Activated B cell treated with CpG ODN at 0.5 μM for 24 hours (primary cell): ENCODE measurements at regions of chr6 and their contacts with region 1.

Region 1: GRCh38 chr6:42879372-42880239 is at the start of gene RPL7L1:
- DNase-seq: peak; percentile 76
- ATAC-seq: peak; percentile 92
- H3K4me3 Mint-ChIP-seq: peak within 1 kb of the TSS; percentile 100
- H3K27ac Mint-ChIP-seq: peak within 1 kb of the TSS; percentile 99
- H3K4me1 Mint-ChIP-seq: peaks cover 28% of the 10 kb centered on the region
- H3K27me3 Mint-ChIP-seq: no peaks in the 10 kb centered on the region
- CTCF ChIP-seq: no peak
- total RNA-seq, gene RPL7L1: 94.5 and 110 TPM in 2 replicates

Region 2: DNA sequence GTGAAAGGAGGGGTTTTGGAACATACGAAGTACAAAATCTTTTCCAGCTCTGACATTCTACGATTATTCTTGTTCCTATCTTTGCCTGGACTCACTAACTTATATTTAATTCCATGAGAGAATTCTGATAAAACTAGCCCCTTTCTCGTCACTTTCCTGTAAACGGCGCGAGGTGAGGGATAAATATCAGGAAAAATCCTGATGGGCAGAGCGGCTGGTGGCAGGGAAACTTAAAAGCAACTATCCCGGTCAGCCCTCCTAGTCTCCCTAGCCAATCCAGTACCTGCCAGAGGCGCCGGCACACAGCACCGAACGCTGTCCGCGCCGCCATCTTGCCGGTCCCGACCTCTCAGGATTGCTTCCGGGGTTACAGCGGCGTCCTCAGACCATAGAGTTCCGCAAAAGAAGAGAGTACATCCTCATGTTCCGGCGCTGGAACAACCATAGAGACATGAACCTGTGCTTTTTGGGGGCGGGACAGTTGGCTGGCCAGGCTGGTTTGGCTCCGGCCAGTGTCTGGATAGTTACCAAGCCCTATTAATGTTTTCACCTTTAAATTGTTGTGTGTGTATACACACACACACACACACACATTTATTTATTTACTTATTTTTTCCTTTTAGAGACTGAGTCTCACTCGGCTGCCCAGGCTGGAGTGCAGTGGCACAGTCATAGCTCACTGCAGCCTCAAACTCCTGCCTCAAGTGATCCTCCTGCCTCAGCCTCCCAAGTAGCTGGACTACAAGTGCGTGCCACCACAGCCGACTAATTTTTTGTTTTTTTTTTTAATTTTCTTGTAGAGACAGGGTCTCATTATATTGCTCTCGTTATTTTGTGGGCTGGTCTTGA is 661.9 kb before region 1 on chr6 and contains the start of gene MRPS10:
- CTCF ChIA-PET with region 1: no interaction called
- POLR2A ChIA-PET with region 1: no interaction called
- intact Hi-C with region 1: loop called (anchors 1 kb)
- DNase-seq: peak; percentile 76
- ATAC-seq: peak; percentile 99
- H3K4me3 Mint-ChIP-seq: peak within 1 kb of the TSS; percentile 99
- H3K27ac Mint-ChIP-seq: peak within 1 kb of the TSS; percentile 95
- H3K4me1 Mint-ChIP-seq: peaks cover 30% of the 10 kb centered on the region
- H3K27me3 Mint-ChIP-seq: no peaks in the 10 kb centered on the region
- CTCF ChIP-seq: no peak
- total RNA-seq, gene MRPS10: 35.7 and 37.0 TPM in 2 replicates

Region 3: GRCh38 chr6:42661540-42662153 is 218.0 kb before region 1 on chr6:
- CTCF ChIA-PET with region 1: interaction called, 51 read pairs
- POLR2A ChIA-PET with region 1: interaction called, 10 read pairs
- intact Hi-C with region 1: loop called (anchors 1 kb)
- DNase-seq: peak; percentile 65
- ATAC-seq: peak; percentile 96
- H3K4me3 Mint-ChIP-seq: no peak overlapping the region
- H3K27ac Mint-ChIP-seq: no peak overlapping the region
- H3K4me1 Mint-ChIP-seq: no peaks in the 10 kb centered on the region
- H3K27me3 Mint-ChIP-seq: no peaks in the 10 kb centered on the region
- CTCF ChIP-seq: peak; percentile 74

Region 4: GRCh38 chr6:42771741-42772100 is 107.9 kb before region 1 on chr6:
- CTCF ChIA-PET with region 1: no interaction called
- POLR2A ChIA-PET with region 1: interaction called, 21 read pairs
- intact Hi-C with region 1: loop called (anchors 1 kb)
- DNase-seq: no peak
- ATAC-seq: no peak
- H3K4me3 Mint-ChIP-seq: peak overlapping the region; percentile 85
- H3K27ac Mint-ChIP-seq: peak overlapping the region; percentile 99
- H3K4me1 Mint-ChIP-seq: peaks cover 57% of the 10 kb centered on the region
- H3K27me3 Mint-ChIP-seq: no peaks in the 10 kb centered on the region
- CTCF ChIP-seq: no peak

Region 5: GRCh38 chr6:42890311-42891198 is 10.9 kb after region 1 on chr6:
- CTCF ChIA-PET with region 1: interaction called, 11 read pairs
- POLR2A ChIA-PET with region 1: interaction called, 85 read pairs
- intact Hi-C with region 1: loop called (anchors 1 kb)
- DNase-seq: peak; percentile 76
- ATAC-seq: peak; percentile 97
- H3K4me3 Mint-ChIP-seq: peak overlapping the region; percentile 97
- H3K27ac Mint-ChIP-seq: peak overlapping the region; percentile 93
- H3K4me1 Mint-ChIP-seq: peaks cover 44% of the 10 kb centered on the region
- H3K27me3 Mint-ChIP-seq: no peaks in the 10 kb centered on the region
- CTCF ChIP-seq: no peak

Region 6: GRCh38 chr6:42901536-42901957 is 21.9 kb after region 1 on chr6:
- CTCF ChIA-PET with region 1: interaction called, 11 read pairs
- POLR2A ChIA-PET with region 1: no interaction called
- intact Hi-C with region 1: loop called (anchors 1 kb)
- DNase-seq: no peak
- ATAC-seq: peak; percentile 100
- H3K4me3 Mint-ChIP-seq: no peak overlapping the region
- H3K27ac Mint-ChIP-seq: no peak overlapping the region
- H3K4me1 Mint-ChIP-seq: peaks cover 12% of the 10 kb centered on the region
- H3K27me3 Mint-ChIP-seq: no peaks in the 10 kb centered on the region
- CTCF ChIP-seq: peak; percentile 36